ENCODE measurements at regions of chr20 and their contacts with region 1.

Region 1: GRCh38 chr20:31951530-31952453 is at the start of gene PDRG1:
- DNase-seq: peak; percentile 93 to 98 (median 96)
- H3K4me3 ChIP-seq: peak within 1 kb of the TSS; percentile 72 to 96 (median 75)
- H3K27ac ChIP-seq: peak within 1 kb of the TSS in 3 of 5 donors; percentile 59 to 84 (median 64)
- H3K4me1 ChIP-seq: peaks cover 8 to 10% of the 10 kb centered on the region in 2 donors
- H3K27me3 ChIP-seq: no peaks in the 10 kb centered on the region
- CTCF ChIP-seq: peak; percentile 84 to 94 (median 90)
- POLR2A ChIP-seq: peak in 1 of 2 donors; percentile 65
- total RNA-seq, gene PDRG1: 5.1 to 27.5 (median 14.4) TPM

Region 2: GRCh38 chr20:31851240-31851955 is 100.4 kb before region 1 on chr20:
- intact Hi-C with region 1: loop called (anchors 5 kb)
- DNase-seq: no peak
- H3K4me3 ChIP-seq: no peak overlapping the region
- H3K27ac ChIP-seq: no peak overlapping the region
- H3K4me1 ChIP-seq: no peaks in the 10 kb centered on the region
- H3K27me3 ChIP-seq: no peaks in the 10 kb centered on the region
- CTCF ChIP-seq: no peak
- POLR2A ChIP-seq: no peak

Region 3: DNA sequence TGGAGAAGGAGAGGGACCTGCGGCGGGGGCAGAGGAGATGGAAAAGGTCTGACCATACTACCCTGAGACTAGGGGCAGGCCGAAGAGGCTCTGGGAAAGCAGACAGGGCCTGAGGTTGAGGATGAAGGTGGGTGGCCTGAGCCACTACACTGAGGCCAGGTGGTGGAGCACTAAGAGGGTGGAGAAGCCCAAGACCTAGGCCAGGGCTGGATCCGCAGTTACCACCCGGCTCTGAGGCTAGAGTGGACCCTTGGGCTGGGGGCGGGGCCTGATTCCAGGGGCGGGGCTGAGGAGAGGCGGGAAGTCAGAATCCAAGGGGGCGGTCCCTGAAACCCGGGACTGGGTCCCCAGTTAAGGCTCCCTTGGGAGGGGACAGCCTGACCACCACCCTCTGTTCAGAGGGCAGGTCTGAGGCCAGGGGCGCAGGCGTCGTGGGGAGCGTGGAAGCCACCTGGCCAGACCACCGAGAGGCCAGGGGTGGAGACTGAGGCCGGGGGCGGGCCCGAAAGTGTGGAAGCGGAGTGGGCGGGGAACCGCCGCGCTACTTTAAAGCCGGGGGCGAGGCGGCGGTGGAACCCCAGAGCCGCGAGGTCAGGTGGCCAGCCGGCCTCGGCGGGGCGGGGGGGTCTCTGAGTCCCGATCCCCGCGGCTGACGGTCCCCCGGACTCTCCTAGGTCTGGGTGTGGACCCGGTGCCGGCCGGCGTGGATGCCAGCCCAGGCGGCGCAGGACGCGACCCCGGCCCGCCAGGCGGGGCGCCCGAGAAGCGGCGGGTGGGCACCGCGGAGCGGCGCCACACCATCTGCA is 66.7 kb after region 1 on chr20:
- intact Hi-C with region 1: no loop called
- DNase-seq: peak in 6 of 7 donors; percentile 35 to 59 (median 50)
- H3K4me3 ChIP-seq: peak overlapping the region in 1 of 4 donors; percentile 70
- H3K27ac ChIP-seq: peak overlapping the region in 1 of 5 donors; percentile 22
- H3K4me1 ChIP-seq: peaks cover 0 to 7% of the 10 kb centered on the region in 2 donors
- H3K27me3 ChIP-seq: peaks cover 27% of the 10 kb centered on the region
- CTCF ChIP-seq: no peak
- POLR2A ChIP-seq: no peak

Measured in adrenal gland (tissue), 19 donors.